PC-3 (cell line): ENCODE measurements at regions of chr2 and their contacts with region 1.

Region 1: GRCh38 chr2:33494155-33494779 is 17.8 kb downstream of the RASGRP3 start:
- DNase-seq: peak; percentile 67
- ATAC-seq: peak; percentile 78
- H3K4me3 ChIP-seq: peak overlapping the region; percentile 51
- H3K27ac ChIP-seq: peak overlapping the region; percentile 93
- H3K4me1 ChIP-seq: peaks cover 29% of the 10 kb centered on the region
- H3K27me3 ChIP-seq: no peaks in the 10 kb centered on the region
- CTCF ChIP-seq: no peak

Region 2: GRCh38 chr2:33236482-33237385 is 257.5 kb before region 1 on chr2:
- CTCF ChIA-PET with region 1: no interaction called
- POLR2A ChIA-PET with region 1: no interaction called
- intact Hi-C with region 1: no loop called
- DNase-seq: peak; percentile 83
- ATAC-seq: peak; percentile 65
- H3K4me3 ChIP-seq: no peak overlapping the region
- H3K27ac ChIP-seq: peak overlapping the region; percentile 98
- H3K4me1 ChIP-seq: peaks cover 43% of the 10 kb centered on the region
- H3K27me3 ChIP-seq: no peaks in the 10 kb centered on the region
- CTCF ChIP-seq: no peak

Region 3: DNA sequence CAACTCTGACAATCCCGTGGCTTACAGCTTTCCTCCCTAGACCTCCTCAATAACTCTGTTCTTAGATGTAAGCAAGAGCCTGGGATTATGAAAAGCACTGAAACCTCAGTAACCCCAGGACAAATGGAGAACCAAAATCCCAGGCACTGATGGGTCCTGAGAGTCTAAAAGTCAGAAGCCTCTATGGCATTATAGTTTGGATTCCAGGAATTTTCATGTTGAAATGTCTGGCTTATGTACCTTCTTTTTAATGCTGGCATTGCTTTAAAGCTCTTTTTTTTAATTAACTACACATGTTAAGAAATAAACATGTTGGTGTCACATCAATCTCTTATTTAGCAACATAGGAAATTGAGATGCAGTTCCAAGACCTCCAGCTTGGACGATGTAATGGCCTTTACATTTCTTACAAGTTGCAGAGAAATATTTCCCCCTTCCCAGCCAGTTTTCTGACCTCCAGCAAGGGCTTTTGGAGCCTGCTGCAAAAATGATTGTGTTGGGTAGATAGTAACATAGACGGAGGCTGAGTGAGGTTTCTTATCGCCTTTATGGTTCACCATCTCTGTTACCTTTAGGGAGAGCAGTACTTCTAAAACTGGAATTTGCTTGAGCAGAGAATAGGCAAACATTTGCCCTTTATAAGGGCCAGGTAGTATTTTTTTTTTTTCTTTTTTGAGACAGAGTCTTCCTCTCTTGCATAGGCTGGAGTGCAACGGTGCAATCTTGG is 102.6 kb before region 1 on chr2:
- CTCF ChIA-PET with region 1: no interaction called
- POLR2A ChIA-PET with region 1: interaction called, 10 read pairs
- intact Hi-C with region 1: no loop called
- DNase-seq: no peak
- ATAC-seq: no peak
- H3K4me3 ChIP-seq: no peak overlapping the region
- H3K27ac ChIP-seq: no peak overlapping the region
- H3K4me1 ChIP-seq: no peaks in the 10 kb centered on the region
- H3K27me3 ChIP-seq: no peaks in the 10 kb centered on the region
- CTCF ChIP-seq: no peak

Region 4: DNA sequence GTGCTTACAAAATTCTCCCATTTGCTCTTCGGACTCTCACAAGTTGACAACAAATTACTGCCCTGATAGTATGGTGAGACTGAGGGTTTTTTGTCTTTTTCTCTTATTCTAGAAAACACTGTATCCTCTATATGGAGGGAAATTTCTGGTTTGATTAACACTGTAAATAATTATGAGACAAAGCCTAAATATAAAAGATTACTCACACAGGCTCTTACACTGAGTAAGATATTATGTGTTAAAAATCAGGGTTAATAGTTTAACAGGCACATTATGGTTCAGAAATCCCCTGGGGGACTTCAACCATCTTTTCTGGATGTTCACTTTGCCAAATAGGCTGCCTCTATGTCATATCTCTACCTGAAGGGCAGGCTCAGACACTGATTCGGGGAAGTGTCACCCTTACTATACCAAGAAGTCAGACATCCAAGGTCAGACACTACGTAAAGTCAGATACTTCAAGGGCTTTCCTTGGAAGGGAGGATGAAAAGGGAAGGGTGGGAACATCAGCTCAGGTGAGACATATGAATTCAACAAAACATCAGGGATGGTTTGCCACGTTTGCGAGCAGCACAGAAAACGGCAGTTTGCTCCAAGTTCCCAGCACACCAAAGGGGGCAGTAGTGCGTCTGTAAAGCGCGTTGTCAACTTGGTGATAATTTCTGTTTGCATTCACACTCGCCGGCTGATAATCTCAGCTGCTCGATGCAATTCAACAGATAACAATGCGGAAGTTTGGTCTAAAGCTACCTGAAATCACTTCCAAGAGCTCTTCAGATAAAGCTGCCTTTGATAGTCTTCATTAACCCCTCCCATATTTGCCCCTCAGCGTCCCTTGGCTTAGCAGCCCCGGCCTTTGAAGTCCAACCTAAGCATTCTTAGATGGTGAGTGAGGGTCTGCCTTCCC is 18.8 kb before region 1 on chr2:
- CTCF ChIA-PET with region 1: no interaction called
- POLR2A ChIA-PET with region 1: no interaction called
- intact Hi-C with region 1: loop called (anchors 1 kb)
- DNase-seq: peak; percentile 80
- ATAC-seq: peak; percentile 78
- H3K4me3 ChIP-seq: peak overlapping the region; percentile 84
- H3K27ac ChIP-seq: peak overlapping the region; percentile 53
- H3K4me1 ChIP-seq: peaks cover 10% of the 10 kb centered on the region; the same call in 1 of the 2 replicates
- H3K27me3 ChIP-seq: no peaks in the 10 kb centered on the region
- CTCF ChIP-seq: peak; percentile 90